ENCODE measurements at regions of chr11 and their contacts with region 1.

Region 1: DNA sequence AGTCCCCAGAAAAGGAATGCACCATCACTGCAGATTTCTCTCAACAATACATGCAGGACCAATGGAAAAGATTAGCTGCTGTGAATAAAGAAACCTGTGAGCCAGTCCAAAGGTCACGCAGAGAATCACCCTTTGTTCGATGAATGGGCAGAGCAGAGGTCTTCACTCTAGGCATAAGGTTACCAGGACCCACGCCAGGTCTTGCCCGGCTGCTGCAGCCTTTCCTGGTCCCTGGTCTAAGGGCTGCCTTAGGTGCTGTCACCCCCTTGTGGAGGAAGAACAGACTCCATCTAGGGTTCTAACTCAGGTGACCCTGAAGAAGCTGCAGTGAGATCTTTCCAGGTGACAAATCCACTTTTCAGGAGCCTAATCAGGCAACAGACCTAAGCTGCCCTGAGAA is 29.0 kb upstream of the NAP1L4 start:
- DNase-seq: no peak
- ATAC-seq: no peak
- H3K4me3 Mint-ChIP-seq: no peak overlapping the region
- H3K27ac Mint-ChIP-seq: no peak overlapping the region
- H3K4me1 Mint-ChIP-seq: peaks cover 18% of the 10 kb centered on the region
- H3K27me3 Mint-ChIP-seq: no peaks in the 10 kb centered on the region
- CTCF ChIP-seq: no peak

Region 2: DNA sequence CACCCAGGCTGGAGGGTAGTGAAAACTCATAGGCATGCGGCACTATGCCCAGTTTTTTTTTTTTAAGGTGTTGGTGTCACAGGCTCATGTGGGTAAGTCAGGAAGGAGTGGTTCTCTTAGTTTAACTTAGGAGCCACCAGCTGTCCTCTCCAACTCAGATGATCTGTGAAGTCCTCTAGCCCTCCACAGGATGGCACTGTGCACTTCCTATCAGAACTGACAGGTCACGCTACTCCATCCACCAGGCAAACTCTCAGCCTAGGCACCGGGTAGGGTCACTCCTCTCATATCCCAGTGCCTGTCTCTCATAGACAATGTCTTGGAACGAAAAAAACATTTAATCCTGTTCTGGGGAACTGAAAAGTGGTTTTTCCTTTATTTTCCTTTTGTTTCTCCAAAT is 45.5 kb before region 1 on chr11:
- CTCF ChIA-PET with region 1: no interaction called
- POLR2A ChIA-PET with region 1: no interaction called
- intact Hi-C with region 1: loop called (anchors 1 kb)
- DNase-seq: no peak
- ATAC-seq: peak; percentile 52
- H3K4me3 Mint-ChIP-seq: no peak overlapping the region
- H3K27ac Mint-ChIP-seq: no peak overlapping the region
- H3K4me1 Mint-ChIP-seq: peaks cover 2% of the 10 kb centered on the region
- H3K27me3 Mint-ChIP-seq: no peaks in the 10 kb centered on the region
- CTCF ChIP-seq: no peak

Region 3: DNA sequence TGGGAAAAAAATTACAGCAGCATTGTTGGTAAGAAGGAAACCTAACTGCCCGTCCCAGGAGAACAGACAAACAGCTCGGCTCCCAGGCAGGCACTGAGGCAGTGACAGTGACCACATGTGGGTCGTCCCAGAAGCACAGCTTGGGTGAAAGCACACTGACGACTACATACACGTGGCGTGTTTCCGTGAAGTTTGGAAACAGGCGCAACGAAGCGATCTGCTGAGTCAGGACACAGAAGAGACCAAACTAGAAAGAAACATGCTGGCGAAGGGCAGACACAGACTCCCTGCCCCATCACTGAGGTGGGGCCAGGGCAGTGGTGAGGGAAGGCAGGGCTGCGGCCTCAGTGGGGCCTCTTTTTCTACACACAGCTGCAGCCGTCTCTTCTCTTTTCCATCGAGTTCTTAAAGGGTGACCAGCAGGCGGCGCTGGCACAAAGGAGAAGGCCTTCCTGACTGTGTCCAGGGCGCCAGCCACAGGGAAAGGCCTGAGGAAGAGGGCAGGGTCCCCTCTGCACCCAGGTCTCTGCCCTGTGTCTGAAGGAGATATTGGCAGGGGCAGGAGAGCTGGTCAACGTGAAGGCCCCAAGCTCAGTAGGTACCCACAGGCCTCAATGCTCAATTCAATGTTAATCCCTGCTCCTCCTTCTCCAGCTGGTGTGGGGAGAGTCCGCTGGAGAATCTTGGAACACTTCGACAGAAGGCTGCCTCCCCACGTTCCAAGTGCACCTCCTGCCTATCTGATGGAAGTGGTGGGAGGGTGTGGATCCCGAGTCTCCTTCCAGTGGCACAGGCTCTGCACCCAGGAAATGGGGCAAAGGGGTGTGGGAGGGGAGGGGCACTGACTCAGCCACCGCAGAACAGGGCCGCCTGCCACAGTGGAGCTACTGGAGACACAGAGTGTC is 16.2 kb after region 1 on chr11:
- CTCF ChIA-PET with region 1: interaction called, 8 read pairs
- POLR2A ChIA-PET with region 1: no interaction called
- intact Hi-C with region 1: loop called (anchors 1 kb)
- DNase-seq: peak; percentile 40
- ATAC-seq: peak; percentile 48
- H3K4me3 Mint-ChIP-seq: no peak overlapping the region
- H3K27ac Mint-ChIP-seq: peak overlapping the region; percentile 70
- H3K4me1 Mint-ChIP-seq: peaks cover 32% of the 10 kb centered on the region
- H3K27me3 Mint-ChIP-seq: no peaks in the 10 kb centered on the region
- CTCF ChIP-seq: no peak

Region 4: DNA sequence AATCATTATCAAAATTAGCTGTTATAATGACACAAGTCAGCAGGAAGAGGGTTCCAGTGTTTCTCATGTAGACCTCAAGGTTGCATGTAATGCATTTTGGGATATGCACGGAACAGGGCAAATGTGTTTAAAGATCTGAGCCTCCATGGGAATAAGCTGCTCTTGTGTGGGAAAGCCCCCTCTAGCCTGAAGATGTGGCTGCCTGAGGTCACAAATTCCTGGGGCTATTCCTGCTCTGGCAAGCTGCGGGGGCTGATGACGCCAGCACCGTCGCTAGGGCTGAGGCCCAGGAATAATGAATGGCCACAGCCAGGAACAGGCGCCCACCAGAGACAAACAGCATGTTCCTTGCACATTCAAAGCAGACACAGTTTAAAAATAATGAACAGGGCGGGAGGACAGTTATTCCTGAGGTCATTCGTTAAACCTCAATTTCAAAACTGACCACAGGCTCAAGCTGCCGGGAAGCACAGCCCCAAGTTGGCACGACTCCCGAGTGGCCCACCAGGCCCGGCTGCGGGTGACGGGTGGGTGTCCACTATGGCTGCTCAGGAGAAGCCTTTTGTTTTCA is 132.3 kb after region 1 on chr11:
- CTCF ChIA-PET with region 1: no interaction called
- POLR2A ChIA-PET with region 1: no interaction called
- intact Hi-C with region 1: no loop called
- DNase-seq: no peak
- ATAC-seq: no peak
- H3K4me3 Mint-ChIP-seq: no peak overlapping the region
- H3K27ac Mint-ChIP-seq: no peak overlapping the region
- H3K4me1 Mint-ChIP-seq: no peaks in the 10 kb centered on the region
- H3K27me3 Mint-ChIP-seq: peaks cover 4% of the 10 kb centered on the region
- CTCF ChIP-seq: no peak

Measured in activated B cell treated with CpG ODN at 0.5 μM for 24 hours (primary cell).